Spleen (tissue), 13 donors: ENCODE measurements at regions of chr3 and their contacts with region 1.

Region 1: DNA sequence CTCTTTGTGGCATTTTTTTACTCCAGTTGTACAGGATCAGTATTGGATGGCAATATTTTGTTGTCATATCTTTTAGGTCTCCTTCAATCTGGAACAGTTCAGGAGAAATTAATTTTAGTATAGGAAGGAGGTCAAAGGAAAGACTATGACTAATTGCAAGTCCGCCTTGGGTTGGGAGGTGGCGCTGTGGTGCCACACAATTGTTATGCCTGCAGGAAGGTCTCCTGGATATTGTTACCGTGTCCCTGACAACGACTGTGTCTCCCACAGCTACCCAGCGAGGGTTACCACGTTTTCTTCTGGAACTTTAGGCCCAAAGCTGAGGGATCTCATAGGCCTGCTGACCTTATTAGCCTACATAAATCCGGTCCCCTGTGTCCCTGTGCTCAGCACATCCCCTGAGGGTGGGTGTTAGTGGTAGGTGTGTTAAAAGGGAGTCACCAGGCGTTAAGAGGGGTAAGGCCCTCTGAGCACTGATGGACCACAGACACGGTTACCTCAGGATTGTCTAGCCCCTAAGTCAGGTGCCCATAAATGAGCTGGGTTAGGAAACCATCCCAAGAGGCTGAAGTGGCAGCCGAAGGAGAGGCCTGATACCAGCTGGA is 31.5 kb downstream of the KCNAB1 start:
- DNase-seq: peak; percentile 82
- H3K4me3 ChIP-seq: no peak overlapping the region
- H3K27ac ChIP-seq: no peak overlapping the region
- H3K4me1 ChIP-seq: peaks cover 0 to 18% (median 8%) of the 10 kb centered on the region in 6 donors
- H3K27me3 ChIP-seq: no peaks in the 10 kb centered on the region
- CTCF ChIP-seq: peak in 10 of 11 experiments; percentile 32 to 73 (median 57)
- POLR2A ChIP-seq: no peak

Region 2: DNA sequence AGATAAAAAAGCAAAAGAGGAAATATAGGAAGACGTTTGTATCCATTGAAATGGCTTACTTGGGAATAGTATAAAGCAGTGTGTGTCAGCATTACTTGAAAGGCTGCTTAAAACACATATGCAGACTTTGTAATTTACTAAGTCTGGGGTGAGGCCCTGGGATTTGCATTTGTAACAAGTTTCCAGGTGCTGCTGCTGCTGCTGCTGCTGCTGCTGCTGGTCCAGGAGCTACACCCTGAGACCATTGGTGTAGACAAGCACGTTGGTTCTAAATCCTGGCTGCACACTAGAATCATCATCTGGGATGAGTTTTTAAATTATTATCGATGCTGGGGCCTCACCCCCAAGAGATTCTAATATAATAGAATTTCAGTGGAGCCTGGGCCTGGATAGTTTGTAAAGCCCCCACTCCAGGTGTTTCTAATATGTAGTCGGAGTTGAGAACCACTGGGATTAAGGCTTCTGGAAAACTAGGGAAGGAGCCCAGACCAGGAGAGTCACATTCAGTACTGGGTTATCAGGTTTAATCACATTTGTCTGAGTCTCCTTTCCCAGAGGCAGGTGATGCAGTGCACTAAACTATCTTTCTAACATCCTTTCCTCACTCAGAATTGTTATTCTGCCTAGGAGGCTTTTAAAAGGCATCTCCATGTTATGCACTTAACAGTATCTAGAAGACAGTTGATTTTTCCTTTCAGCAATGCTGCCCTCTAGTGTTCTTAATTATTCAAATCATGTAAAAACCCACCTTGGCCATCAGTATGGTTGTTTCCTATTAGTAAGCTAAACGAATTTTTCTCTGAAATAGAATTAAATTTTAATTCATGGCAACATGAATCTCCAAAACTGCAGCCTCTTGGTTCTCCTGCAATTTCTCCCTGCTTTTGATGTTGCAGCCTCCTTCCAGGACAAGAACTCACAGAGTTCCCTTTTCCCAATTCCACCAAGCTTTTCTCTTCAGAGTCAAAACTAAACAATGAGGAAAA is 357.6 kb after region 1 on chr3:
- intact Hi-C with region 1: loop called (anchors 10 kb)
- DNase-seq: no peak
- H3K4me3 ChIP-seq: no peak overlapping the region
- H3K27ac ChIP-seq: no peak overlapping the region
- H3K4me1 ChIP-seq: no peaks in the 10 kb centered on the region
- H3K27me3 ChIP-seq: no peaks in the 10 kb centered on the region
- CTCF ChIP-seq: peak; percentile 21 to 77 (median 64)
- POLR2A ChIP-seq: no peak